CD8-positive, alpha-beta T cell (primary cell): ENCODE measurements at regions of chr13 and their contacts with region 1.

Region 1: DNA sequence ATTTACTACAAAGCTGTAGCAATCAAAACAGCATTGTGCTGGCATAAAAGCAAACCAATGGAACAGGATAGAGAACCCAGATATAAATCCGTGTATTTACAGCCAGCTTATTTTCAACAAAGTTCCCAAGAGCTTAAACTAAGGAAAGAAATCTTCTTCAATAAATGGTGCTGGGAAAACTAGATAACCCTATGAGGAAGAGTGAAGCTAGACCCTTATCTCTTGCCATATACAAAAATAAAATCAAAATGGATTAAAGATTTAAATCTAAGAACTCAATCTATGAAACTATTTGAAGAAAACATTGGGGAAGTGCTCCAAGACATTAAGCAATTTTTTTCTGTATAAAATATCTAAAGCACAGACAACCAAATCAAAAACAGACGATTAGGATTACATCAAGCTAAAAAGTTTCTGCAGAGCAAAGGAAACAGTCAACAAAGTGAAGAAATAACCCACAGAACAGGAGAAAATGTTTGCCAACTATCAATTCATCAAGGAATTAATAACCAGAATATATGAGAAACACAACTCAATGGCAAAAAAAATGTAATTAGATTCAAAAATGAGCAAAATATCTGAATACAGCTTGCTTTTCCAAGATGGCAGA is 480.7 kb downstream of the LMO7 start:
- DNase-seq: no peak
- ATAC-seq: no peak
- H3K4me3 ChIP-seq: no peak overlapping the region
- H3K4me3 Mint-ChIP-seq: no peak overlapping the region
- H3K27ac ChIP-seq: no peak overlapping the region
- H3K27ac Mint-ChIP-seq: no peak overlapping the region
- H3K4me1 ChIP-seq: no peaks in the 10 kb centered on the region
- H3K4me1 Mint-ChIP-seq: no peaks in the 10 kb centered on the region
- H3K27me3 ChIP-seq: no peaks in the 10 kb centered on the region
- H3K27me3 Mint-ChIP-seq: no peaks in the 10 kb centered on the region
- CTCF ChIP-seq: no peak

Region 2: GRCh38 chr13:75876360-75877050 is 240.4 kb before region 1 on chr13:
- CTCF ChIA-PET with region 1: no interaction called
- POLR2A ChIA-PET with region 1: no interaction called
- intact Hi-C with region 1: no loop called
- DNase-seq: peak; percentile 8 to 69 (median 46)
- ATAC-seq: peak; percentile 95
- H3K4me3 ChIP-seq: no peak overlapping the region
- H3K4me3 Mint-ChIP-seq: peak overlapping the region; percentile 52
- H3K27ac ChIP-seq: no peak overlapping the region
- H3K27ac Mint-ChIP-seq: no peak overlapping the region
- H3K4me1 ChIP-seq: no peaks in the 10 kb centered on the region
- H3K4me1 Mint-ChIP-seq: peaks cover 17% of the 10 kb centered on the region
- H3K27me3 ChIP-seq: no peaks in the 10 kb centered on the region
- H3K27me3 Mint-ChIP-seq: peaks cover 2% of the 10 kb centered on the region
- CTCF ChIP-seq: peak; percentile 87

Region 3: GRCh38 chr13:76067850-76068249 is 49.0 kb before region 1 on chr13:
- CTCF ChIA-PET with region 1: no interaction called
- POLR2A ChIA-PET with region 1: no interaction called
- intact Hi-C with region 1: loop called in 1 of 2 experiments (anchors 1 kb)
- DNase-seq: no peak
- ATAC-seq: no peak
- H3K4me3 ChIP-seq: no peak overlapping the region
- H3K4me3 Mint-ChIP-seq: no peak overlapping the region
- H3K27ac ChIP-seq: no peak overlapping the region
- H3K27ac Mint-ChIP-seq: no peak overlapping the region
- H3K4me1 ChIP-seq: no peaks in the 10 kb centered on the region
- H3K4me1 Mint-ChIP-seq: no peaks in the 10 kb centered on the region
- H3K27me3 ChIP-seq: no peaks in the 10 kb centered on the region
- H3K27me3 Mint-ChIP-seq: no peaks in the 10 kb centered on the region
- CTCF ChIP-seq: no peak